ENCODE measurements at regions of chr15 and their contacts with region 1.

Region 1: DNA sequence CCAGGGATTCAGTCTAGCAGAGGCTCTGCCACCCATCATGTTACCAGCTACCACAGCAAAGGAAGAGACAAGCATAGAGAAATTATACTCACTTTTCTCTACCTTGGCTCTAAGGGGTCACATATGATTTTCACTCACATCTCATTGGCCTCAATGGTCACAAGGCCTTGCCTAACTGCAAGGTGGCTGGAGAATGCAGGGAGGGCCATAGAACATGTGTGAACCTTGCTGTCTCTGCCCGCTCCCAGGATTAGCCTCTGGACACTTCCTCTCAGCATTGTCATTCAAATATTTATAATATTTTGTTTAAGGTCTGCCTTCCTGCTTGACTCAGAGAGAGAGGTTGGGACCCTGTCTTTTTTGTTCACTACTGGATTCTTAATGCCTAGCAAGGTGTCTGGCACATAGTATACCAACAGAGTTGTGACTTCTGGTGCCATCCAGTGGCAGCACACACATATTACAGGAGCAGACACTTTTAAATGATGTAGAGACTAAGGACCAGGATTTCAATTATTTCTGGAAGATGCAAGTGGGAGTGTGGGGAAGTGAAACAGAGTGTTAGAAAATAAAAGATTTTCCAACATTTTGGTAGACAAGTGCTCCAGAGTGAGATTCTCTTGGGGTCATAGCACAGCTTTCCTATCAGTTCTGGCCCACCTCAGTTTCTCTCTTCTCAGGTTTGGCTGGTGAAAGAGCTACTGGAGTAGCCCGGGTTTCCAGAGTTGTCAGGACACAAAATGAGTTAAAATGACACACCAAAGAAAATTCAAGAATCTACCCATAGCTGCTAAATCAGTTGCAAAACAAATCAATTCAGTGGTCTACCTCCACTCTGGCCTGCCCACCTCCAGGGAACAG is 119.0 kb upstream of the RASGRP1 start:
- DNase-seq: peak; percentile 54
- H3K4me3 Mint-ChIP-seq: no peak overlapping the region
- H3K27ac Mint-ChIP-seq: no peak overlapping the region
- H3K4me1 Mint-ChIP-seq: peaks cover under 1% of the 10 kb centered on the region
- H3K27me3 Mint-ChIP-seq: no peaks in the 10 kb centered on the region
- CTCF ChIP-seq: peak; percentile 76

Region 2: DNA sequence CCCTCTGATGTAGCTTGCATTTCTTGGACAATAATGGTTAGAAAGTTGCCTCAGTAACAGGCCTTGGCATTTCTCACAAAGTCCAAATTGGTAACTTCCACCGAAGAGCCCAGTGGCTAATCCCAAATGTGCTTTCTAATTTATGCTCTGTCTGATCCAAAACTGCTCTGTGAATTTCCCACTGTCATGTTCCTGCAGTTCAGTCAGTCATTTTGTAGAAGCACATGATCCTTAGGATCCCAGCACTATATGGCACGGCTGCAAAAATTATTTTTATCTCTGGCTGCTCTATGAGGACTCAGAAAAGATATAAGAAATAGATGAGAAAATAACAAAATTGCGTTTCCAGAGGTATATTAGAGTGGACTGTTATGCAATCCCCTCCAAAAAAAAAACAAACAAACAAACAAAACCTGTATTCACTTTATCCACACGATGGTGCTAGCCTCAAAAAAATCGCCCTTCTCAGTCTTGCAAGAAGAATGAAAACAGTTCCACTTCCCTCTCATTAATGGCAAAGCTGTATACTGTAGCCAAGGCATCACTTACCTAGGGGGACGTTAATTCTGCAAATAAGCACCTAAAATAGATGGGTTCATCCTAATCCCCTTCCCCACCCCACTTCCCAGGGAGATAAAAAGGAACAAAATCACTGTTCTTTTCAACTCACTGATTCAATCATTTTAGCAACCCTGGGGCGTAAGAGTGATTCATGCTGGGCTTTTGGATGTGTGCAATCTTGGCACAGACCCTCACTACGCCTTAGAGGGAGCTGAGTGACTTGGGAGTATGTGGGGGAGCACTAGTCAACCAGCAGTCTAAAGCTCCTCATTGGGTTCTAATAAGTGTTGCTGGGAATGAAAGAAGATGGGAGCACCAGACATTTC is 687.9 kb before region 1 on chr15:
- CTCF ChIA-PET with region 1: interaction called, 13 read pairs
- POLR2A ChIA-PET with region 1: no interaction called
- intact Hi-C with region 1: loop called (anchors 1 kb)
- DNase-seq: peak; percentile 82
- H3K4me3 Mint-ChIP-seq: no peak overlapping the region
- H3K27ac Mint-ChIP-seq: no peak overlapping the region
- H3K4me1 Mint-ChIP-seq: peaks cover 13% of the 10 kb centered on the region
- H3K27me3 Mint-ChIP-seq: peaks cover 26% of the 10 kb centered on the region
- CTCF ChIP-seq: peak; percentile 73

Region 3: DNA sequence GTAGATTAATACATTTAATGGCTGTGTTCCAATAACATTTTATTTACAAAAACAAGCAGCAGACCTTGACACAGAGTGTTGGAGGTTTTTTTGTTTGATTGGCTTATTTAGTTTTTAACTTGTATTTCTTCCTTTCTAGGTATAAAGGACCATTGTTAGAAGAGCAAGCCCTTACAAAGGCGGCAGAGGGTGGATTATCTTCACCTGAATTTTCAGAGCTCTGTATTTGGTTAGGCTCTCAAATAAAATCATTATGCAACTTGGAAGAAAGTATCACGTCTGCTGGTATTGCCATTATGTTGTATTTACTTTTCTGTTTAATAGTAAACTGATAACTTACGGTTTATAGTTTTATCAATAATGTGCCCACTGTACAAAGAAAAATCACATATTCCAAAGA is 219.7 kb before region 1 on chr15:
- CTCF ChIA-PET with region 1: interaction called, 19 read pairs
- POLR2A ChIA-PET with region 1: no interaction called
- intact Hi-C with region 1: no loop called
- DNase-seq: no peak
- H3K4me3 Mint-ChIP-seq: no peak overlapping the region
- H3K27ac Mint-ChIP-seq: no peak overlapping the region
- H3K4me1 Mint-ChIP-seq: peaks cover 12% of the 10 kb centered on the region
- H3K27me3 Mint-ChIP-seq: no peaks in the 10 kb centered on the region
- CTCF ChIP-seq: no peak

Region 4: GRCh38 chr15:38479266-38479665 is 204.3 kb before region 1 on chr15:
- CTCF ChIA-PET with region 1: interaction called, 34 read pairs
- POLR2A ChIA-PET with region 1: no interaction called
- intact Hi-C with region 1: loop called (anchors 1 kb)
- DNase-seq: no peak
- H3K4me3 Mint-ChIP-seq: no peak overlapping the region
- H3K27ac Mint-ChIP-seq: peak overlapping the region; percentile 57
- H3K4me1 Mint-ChIP-seq: peaks cover 3% of the 10 kb centered on the region
- H3K27me3 Mint-ChIP-seq: no peaks in the 10 kb centered on the region
- CTCF ChIP-seq: no peak

Region 5: GRCh38 chr15:38563723-38564519 is 119.7 kb before region 1 on chr15:
- CTCF ChIA-PET with region 1: interaction called, 53 read pairs
- POLR2A ChIA-PET with region 1: no interaction called
- intact Hi-C with region 1: loop called (anchors 1 kb)
- DNase-seq: peak; percentile 50
- H3K4me3 Mint-ChIP-seq: peak overlapping the region; percentile 60
- H3K27ac Mint-ChIP-seq: no peak overlapping the region
- H3K4me1 Mint-ChIP-seq: no peaks in the 10 kb centered on the region
- H3K27me3 Mint-ChIP-seq: peaks cover 11% of the 10 kb centered on the region
- CTCF ChIP-seq: peak; percentile 71

Region 6: GRCh38 chr15:38589502-38589901 is 94.1 kb before region 1 on chr15:
- CTCF ChIA-PET with region 1: no interaction called
- POLR2A ChIA-PET with region 1: no interaction called
- intact Hi-C with region 1: no loop called
- DNase-seq: peak; percentile 93
- H3K4me3 Mint-ChIP-seq: no peak overlapping the region
- H3K27ac Mint-ChIP-seq: no peak overlapping the region
- H3K4me1 Mint-ChIP-seq: peaks cover 20% of the 10 kb centered on the region
- H3K27me3 Mint-ChIP-seq: no peaks in the 10 kb centered on the region
- CTCF ChIP-seq: no peak

Region 7: GRCh38 chr15:38610748-38611147 is 72.9 kb before region 1 on chr15:
- CTCF ChIA-PET with region 1: no interaction called
- POLR2A ChIA-PET with region 1: no interaction called
- intact Hi-C with region 1: no loop called
- DNase-seq: no peak
- H3K4me3 Mint-ChIP-seq: no peak overlapping the region
- H3K27ac Mint-ChIP-seq: no peak overlapping the region
- H3K4me1 Mint-ChIP-seq: no peaks in the 10 kb centered on the region
- H3K27me3 Mint-ChIP-seq: peaks cover 24% of the 10 kb centered on the region
- CTCF ChIP-seq: no peak

Region 8: DNA sequence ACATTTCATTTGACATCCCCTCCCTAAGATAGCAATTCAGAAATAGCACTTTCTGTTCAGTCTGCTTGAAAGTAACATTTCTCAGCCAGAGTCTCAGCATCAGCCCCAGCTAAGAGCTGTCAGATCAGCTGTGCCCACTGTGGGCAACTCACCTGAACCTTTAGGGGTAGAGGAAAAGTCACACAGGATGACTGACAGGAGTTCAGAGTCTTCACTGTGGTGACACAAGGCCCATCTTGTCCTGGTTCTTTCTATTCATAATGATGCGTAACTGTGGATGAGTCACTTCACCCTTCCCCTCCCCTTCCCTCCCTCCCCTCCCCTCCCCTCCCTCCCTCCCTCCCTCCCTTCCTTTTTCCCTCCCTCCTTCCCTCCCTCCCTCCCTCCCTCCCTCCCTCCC is 22.9 kb before region 1 on chr15:
- CTCF ChIA-PET with region 1: interaction called, 19 read pairs
- POLR2A ChIA-PET with region 1: interaction called, 3 read pairs
- intact Hi-C with region 1: no loop called
- DNase-seq: no peak
- H3K4me3 Mint-ChIP-seq: no peak overlapping the region
- H3K27ac Mint-ChIP-seq: no peak overlapping the region
- H3K4me1 Mint-ChIP-seq: no peaks in the 10 kb centered on the region
- H3K27me3 Mint-ChIP-seq: peaks cover 16% of the 10 kb centered on the region
- CTCF ChIP-seq: no peak

Region 9: DNA sequence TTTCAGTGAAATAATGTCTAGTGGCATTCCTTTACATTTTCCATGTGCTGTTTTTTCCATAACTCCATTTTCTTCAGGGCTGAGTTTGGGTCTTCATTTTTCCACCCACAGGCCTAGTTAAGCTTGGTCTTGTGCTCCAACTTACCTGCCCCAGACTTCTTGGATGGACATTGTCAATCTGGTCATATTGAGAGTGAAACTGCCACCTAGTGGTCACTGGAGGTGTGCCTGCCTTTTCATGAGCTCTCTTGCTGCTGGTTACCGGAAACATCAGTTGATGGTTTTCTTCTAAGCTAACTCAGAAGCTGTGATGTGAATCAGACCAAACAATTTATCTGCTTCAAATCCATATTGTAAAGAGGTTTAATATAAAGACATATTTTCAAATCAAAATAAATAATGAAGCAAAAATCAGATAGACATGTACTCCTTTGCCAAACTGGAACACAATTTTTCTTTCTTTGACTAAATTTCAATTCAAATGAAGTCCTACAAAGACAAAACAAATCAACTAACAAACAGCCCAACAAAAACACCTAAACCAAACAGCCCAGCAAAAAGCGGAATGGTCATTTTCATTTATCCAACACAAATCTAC is 16.1 kb after region 1 on chr15:
- CTCF ChIA-PET with region 1: interaction called, 258 read pairs
- POLR2A ChIA-PET with region 1: no interaction called
- intact Hi-C with region 1: no loop called
- DNase-seq: peak; percentile 72
- H3K4me3 Mint-ChIP-seq: no peak overlapping the region
- H3K27ac Mint-ChIP-seq: no peak overlapping the region
- H3K4me1 Mint-ChIP-seq: no peaks in the 10 kb centered on the region
- H3K27me3 Mint-ChIP-seq: no peaks in the 10 kb centered on the region
- CTCF ChIP-seq: peak; percentile 68